A549 (cell line): ENCODE measurements at regions of chr20 and their contacts with region 1.

Region 1: GRCh38 chr20:22586645-22587310 is 2.4 kb upstream of the FOXA2 start:
- DNase-seq: peak; percentile 71 to 83
- ATAC-seq: peak; percentile 35 to 63
- H3K4me3 ChIP-seq: peak overlapping the region; percentile 54
- H3K27ac ChIP-seq: peak overlapping the region; percentile 94 to 96
- H3K4me1 ChIP-seq: peaks cover 24% of the 10 kb centered on the region
- CTCF ChIP-seq: peak; percentile 98
- EP300 ChIP-seq: no peak
- POLR2A ChIP-seq: no peak
- RAD21 ChIP-seq: peak; percentile 94 to 100

Region 2: GRCh38 chr20:22346716-22347115 is 240.1 kb before region 1 on chr20:
- CTCF ChIA-PET with region 1: interaction called, 276 read pairs
- POLR2A ChIA-PET with region 1: interaction called, 3 read pairs
- DNase-seq: no peak
- ATAC-seq: 0 out of 6 replicates have a peak, but pooled peaks of 1 of the 2 experiments have one; percentile 27
- H3K4me3 ChIP-seq: no peak overlapping the region
- H3K27ac ChIP-seq: peak overlapping the region in 1 of 2 experiments; percentile 18; a peak in 3 of 6 replicates
- H3K4me1 ChIP-seq: peaks cover 13% of the 10 kb centered on the region
- CTCF ChIP-seq: no peak
- EP300 ChIP-seq: no peak
- POLR2A ChIP-seq: no peak
- RAD21 ChIP-seq: no peak

Region 3: DNA sequence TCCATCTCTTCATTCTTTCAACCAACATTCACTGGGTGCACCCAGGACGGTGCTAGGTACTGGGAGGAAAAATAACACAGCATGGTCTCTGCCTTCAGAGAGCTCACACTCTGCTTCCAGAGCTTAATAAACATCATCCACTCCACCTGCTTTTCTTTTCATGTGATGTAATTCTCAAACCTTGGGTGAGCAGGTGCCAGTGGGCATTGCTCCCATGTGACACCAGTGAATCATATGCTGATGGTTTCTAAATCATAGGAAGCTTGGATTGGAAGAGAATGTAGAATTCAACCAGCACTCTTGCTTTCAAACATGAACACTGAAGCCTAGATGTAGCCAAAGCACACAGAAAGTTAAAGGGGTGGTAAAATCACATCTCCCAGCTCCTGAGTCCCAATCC is 192.2 kb before region 1 on chr20:
- CTCF ChIA-PET with region 1: interaction called, 134 read pairs
- POLR2A ChIA-PET with region 1: interaction called, 3 read pairs
- DNase-seq: no peak
- ATAC-seq: no peak
- H3K4me3 ChIP-seq: no peak overlapping the region
- H3K27ac ChIP-seq: peak overlapping the region; percentile 28 to 70
- H3K4me1 ChIP-seq: peaks cover 49% of the 10 kb centered on the region
- CTCF ChIP-seq: no peak
- EP300 ChIP-seq: no peak
- POLR2A ChIP-seq: no peak
- RAD21 ChIP-seq: no peak

Region 4: GRCh38 chr20:22462975-22463914 is 123.5 kb before region 1 on chr20:
- CTCF ChIA-PET with region 1: interaction called, 32 read pairs
- POLR2A ChIA-PET with region 1: no interaction called
- DNase-seq: peak in 1 of 2 experiments; percentile 48
- ATAC-seq: peak; percentile 60 to 71
- H3K4me3 ChIP-seq: no peak overlapping the region
- H3K27ac ChIP-seq: peak overlapping the region; percentile 78 to 86
- H3K4me1 ChIP-seq: peaks cover 51% of the 10 kb centered on the region
- CTCF ChIP-seq: no peak
- EP300 ChIP-seq: no peak; a peak in 1 of 5 replicates
- POLR2A ChIP-seq: no peak
- RAD21 ChIP-seq: no peak

Region 5: DNA sequence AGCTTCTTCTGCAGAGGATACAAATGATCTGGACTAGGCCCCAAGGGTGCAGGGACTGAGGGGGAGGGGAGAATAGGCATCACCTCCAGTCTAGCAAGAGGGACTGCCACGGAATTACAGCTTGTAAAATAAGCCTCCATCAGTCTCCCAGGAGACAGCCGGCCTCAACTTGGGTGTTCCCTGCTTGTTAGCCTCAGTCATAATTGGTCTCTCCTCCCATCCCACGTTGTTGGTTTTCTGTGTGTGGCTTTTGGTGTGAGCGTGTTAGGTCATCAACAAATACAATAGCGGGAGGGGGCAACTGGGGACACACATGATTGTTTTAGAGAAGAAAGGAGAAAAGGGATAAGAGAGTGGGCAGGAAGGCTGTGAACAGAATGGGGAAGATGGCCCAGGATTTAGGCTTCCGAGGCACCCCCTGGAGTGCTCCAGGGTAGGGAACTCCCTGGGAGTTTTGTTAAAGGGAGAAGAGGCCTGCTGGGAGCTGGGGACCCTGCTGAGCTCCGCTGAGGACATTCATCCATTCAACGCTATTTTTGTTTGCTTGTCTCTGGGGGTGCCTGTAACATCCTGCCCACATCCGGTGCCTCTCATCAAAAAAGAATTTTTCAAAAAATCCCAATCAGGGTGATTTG is 11.6 kb before region 1 on chr20:
- CTCF ChIA-PET with region 1: interaction called, 80 read pairs
- POLR2A ChIA-PET with region 1: interaction called, 4 read pairs
- DNase-seq: peak in 1 of 2 experiments; percentile 38
- ATAC-seq: peak in 1 of 2 experiments; percentile 25; a peak in 3 of 6 replicates
- H3K4me3 ChIP-seq: no peak overlapping the region
- H3K27ac ChIP-seq: peak overlapping the region; percentile 7 to 72; a peak in 4 of 6 replicates
- H3K4me1 ChIP-seq: peaks cover 39% of the 10 kb centered on the region
- CTCF ChIP-seq: no peak
- EP300 ChIP-seq: peak in 1 of 2 experiments; percentile 47; a peak in 1 of 5 replicates
- POLR2A ChIP-seq: no peak
- RAD21 ChIP-seq: no peak

Region 6: DNA sequence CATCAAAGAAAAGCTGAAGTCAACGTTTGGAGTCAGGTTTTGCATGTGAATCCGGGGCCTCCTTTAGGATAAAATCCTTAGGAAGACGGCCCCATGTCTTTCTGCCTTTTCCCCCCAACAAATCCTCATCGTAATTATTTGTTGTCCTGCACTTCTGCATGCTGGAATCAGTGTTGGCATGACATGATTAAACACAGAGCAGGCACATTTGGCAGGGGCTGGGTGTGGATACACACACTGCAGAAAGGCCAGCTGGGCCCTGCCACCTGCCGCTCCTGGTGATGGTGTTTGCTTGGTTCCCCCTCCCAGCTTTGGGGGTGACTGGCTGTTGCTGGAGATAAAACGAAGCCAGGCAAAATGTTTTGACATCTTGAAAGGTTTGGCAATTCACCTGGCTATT is 43.9 kb after region 1 on chr20:
- CTCF ChIA-PET with region 1: interaction called, 28 read pairs
- POLR2A ChIA-PET with region 1: no interaction called
- DNase-seq: no peak
- ATAC-seq: no peak
- H3K4me3 ChIP-seq: no peak overlapping the region
- H3K27ac ChIP-seq: no peak overlapping the region
- H3K4me1 ChIP-seq: no peaks in the 10 kb centered on the region
- CTCF ChIP-seq: no peak
- EP300 ChIP-seq: no peak
- POLR2A ChIP-seq: no peak
- RAD21 ChIP-seq: no peak

Region 7: GRCh38 chr20:22904386-22904785 is 317.6 kb after region 1 on chr20:
- CTCF ChIA-PET with region 1: no interaction called
- POLR2A ChIA-PET with region 1: no interaction called
- DNase-seq: no peak
- ATAC-seq: no peak
- H3K4me3 ChIP-seq: no peak overlapping the region
- H3K27ac ChIP-seq: no peak overlapping the region
- H3K4me1 ChIP-seq: no peaks in the 10 kb centered on the region
- CTCF ChIP-seq: no peak
- EP300 ChIP-seq: no peak
- POLR2A ChIP-seq: no peak
- RAD21 ChIP-seq: no peak